GM23248 (cell line): ENCODE measurements at regions of chr16 and their contacts with region 1.

Region 1: DNA sequence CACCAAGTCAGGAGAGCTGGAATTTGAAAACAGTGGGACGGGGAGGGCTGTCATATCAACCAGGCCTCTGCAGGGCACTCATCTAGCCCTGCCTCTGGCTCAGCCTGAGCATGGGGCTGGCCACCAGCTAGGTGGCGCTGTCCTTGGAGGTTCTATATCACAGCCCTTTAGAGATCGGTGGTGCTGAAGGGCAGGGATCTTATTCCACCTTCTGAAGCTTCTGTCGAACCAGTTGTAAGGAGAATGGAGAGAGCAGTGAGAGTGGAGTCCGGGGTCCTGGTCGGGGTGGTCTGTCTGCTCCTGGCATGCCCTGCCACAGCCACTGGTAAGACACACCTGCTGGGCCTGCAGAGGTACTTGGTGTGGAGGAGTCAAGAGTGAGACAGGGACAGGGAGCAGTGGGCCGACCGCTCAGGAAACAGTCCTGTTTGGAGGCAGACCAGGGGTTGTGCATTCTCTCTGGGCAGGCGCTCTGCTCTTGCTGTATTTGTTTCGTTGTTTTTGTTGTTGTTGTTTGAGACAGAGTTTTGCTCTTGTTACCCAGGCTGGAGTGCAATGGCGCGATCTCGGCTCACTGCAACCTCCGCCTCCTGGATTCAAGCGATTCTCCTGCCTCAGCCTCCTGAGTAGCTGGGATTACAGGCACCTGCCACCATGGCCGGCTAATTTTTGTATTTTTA is at the start of gene CES3:
- DNase-seq: peak; percentile 83
- H3K4me3 ChIP-seq: no peak within 1 kb of the TSS
- H3K27ac ChIP-seq: no peak within 1 kb of the TSS
- H3K4me1 ChIP-seq: no peaks in the 10 kb centered on the region
- H3K27me3 ChIP-seq: peaks cover 4% of the 10 kb centered on the region; the same call in 1 of the 2 replicates
- total RNA-seq, gene CES3: not detected in 2 replicates

Region 2: GRCh38 chr16:66751303-66751991 is 209.8 kb before region 1 on chr16 and contains the start of gene DYNC1LI2:
- in situ Hi-C with region 1: no loop called
- DNase-seq: peak; percentile 92
- H3K4me3 ChIP-seq: peak within 1 kb of the TSS; percentile 86
- H3K27ac ChIP-seq: peak within 1 kb of the TSS; percentile 75
- H3K4me1 ChIP-seq: peaks cover 16% of the 10 kb centered on the region
- H3K27me3 ChIP-seq: no peaks in the 10 kb centered on the region
- total RNA-seq, gene DYNC1LI2: 80.6 and 89.2 TPM in 2 replicates

Region 3: GRCh38 chr16:67055712-67056487 is 94.7 kb after region 1 on chr16:
- in situ Hi-C with region 1: no loop called
- DNase-seq: peak; percentile 97
- H3K4me3 ChIP-seq: peak overlapping the region; percentile 49; the same call in 1 of the 2 replicates
- H3K27ac ChIP-seq: peak overlapping the region; percentile 76
- H3K4me1 ChIP-seq: peaks cover 27% of the 10 kb centered on the region
- H3K27me3 ChIP-seq: no peaks in the 10 kb centered on the region

Region 4: DNA sequence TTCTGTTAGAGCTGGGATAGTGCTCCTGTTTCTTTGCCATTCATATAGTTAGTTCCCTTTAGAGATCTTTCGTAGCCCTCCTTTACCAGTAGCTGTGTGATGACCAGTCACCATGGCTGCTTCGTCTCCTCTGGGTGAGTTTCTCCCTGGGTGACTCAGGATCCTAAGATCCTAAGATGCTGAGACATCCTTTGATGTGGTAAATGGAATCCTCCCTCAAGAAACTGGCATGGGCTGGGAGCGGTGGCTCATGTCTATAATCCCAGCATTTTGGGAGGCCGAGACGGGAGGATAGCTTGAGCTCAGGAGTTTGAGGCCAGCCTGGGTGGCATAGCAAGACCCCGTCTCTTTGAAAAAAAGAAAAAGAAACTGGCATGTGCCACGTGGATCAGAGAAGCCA is 154.4 kb after region 1 on chr16:
- in situ Hi-C with region 1: no loop called
- DNase-seq: peak; percentile 99
- H3K4me3 ChIP-seq: no peak overlapping the region
- H3K27ac ChIP-seq: peak overlapping the region; percentile 85
- H3K4me1 ChIP-seq: peaks cover 24% of the 10 kb centered on the region
- H3K27me3 ChIP-seq: no peaks in the 10 kb centered on the region

Region 5: GRCh38 chr16:67159593-67160406 is 198.6 kb after region 1 on chr16 and contains the starts of genes FBXL8 and TRADD:
- in situ Hi-C with region 1: loop called (anchors 25 kb)
- DNase-seq: peak; percentile 87
- H3K4me3 ChIP-seq: peak within 1 kb of the TSS; percentile 97
- H3K27ac ChIP-seq: peak within 1 kb of the TSS; percentile 70
- H3K4me1 ChIP-seq: no peaks in the 10 kb centered on the region
- H3K27me3 ChIP-seq: no peaks in the 10 kb centered on the region
- total RNA-seq, gene FBXL8: 22.5 and 24.0 TPM in 2 replicates
- total RNA-seq, gene TRADD: 44.6 and 46.2 TPM in 2 replicates